ENCODE measurements at regions of chr11 and their contacts with region 1.

Region 1: DNA sequence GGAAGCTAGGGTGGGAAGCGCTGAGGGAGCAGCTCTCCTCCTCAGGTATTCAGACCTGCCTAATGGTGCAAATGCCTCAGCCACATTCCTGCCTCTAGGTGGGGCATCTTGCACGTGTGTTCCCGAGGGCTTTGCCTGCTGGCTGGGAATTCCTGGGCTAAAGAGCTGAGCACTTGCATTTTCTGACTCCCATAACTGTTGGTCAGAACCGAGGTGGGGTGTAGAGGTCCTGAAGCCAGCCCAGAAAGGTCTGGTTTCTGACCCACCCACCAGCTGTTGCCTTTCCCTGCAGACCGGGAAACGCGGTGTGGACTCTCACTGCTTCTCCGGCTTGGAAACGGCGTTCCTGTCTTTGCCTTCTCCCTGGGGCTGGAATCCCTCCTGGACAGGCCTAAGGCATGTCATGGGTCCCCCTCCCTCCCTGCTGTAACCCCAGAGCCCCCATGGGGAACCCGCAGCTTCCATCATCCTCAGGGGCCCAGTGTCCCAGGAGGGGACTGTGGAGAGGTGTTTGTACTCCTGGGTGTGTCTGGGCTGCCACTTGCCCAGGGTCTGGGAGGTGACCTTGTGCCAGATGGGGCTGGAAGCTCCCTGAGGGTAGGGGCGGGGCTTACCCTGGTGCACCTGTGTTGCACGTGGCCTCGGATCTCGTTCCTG is 24.0 kb upstream of the SMIM38 start:
- DNase-seq: peak in 4 of 5 donors; percentile 63 to 81 (median 70)
- ATAC-seq: peak; percentile 75 to 86 (median 81)
- H3K4me3 ChIP-seq: no peak overlapping the region
- H3K27ac ChIP-seq: peak overlapping the region in 8 of 12 donors; percentile 1 to 68 (median 41)
- H3K4me1 ChIP-seq: peaks cover 0 to 20% (median 14%) of the 10 kb centered on the region in 12 donors
- H3K27me3 ChIP-seq: no peaks in the 10 kb centered on the region
- CTCF ChIP-seq: peak; percentile 63 to 89 (median 85)
- POLR2A ChIP-seq: no peak

Region 2: DNA sequence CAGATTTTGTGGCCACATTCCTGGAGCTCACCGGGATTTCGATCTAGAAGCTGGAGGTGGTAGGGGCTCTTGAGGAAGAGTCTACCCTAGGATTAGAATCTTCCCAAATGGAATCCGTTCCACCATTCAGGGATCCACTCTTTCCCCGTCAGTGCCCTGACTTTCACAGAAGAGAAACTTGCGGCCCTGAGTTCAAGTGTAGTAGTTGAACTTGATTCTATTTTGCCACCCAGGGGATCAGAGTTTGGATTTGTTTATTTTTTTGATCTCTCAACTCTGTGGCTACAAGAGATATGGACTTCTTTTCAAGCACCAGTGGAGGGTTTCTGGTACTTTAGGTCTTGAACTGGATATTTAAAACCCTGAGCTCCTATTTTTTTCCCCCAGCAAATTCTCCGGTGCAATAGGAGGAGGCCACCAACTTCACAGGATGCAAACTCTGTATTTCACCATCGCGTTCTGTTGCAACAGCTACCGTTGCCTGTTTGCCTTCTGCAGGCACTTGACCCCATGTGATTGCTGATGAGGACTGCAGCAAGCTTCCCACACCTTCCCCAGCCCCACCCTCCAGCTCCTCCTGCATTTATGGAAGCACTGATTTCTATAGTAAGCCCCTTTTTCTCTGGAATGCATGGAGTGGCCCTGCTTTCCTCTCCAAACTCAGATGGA is 103.9 kb before region 1 on chr11:
- intact Hi-C with region 1: no loop called
- DNase-seq: no peak
- ATAC-seq: no peak
- H3K4me3 ChIP-seq: no peak overlapping the region
- H3K27ac ChIP-seq: no peak overlapping the region
- H3K4me1 ChIP-seq: no peaks in the 10 kb centered on the region
- H3K27me3 ChIP-seq: no peaks in the 10 kb centered on the region
- CTCF ChIP-seq: no peak
- POLR2A ChIP-seq: no peak

Region 3: GRCh38 chr11:69200331-69201065 is 68.7 kb after region 1 on chr11:
- intact Hi-C with region 1: loop called in 2 of 10 experiments (anchors 2 to 10 kb)
- DNase-seq: peak; percentile 53 to 76 (median 55)
- ATAC-seq: peak in 3 of 4 donors; percentile 34 to 74 (median 54)
- H3K4me3 ChIP-seq: no peak overlapping the region
- H3K27ac ChIP-seq: no peak overlapping the region
- H3K4me1 ChIP-seq: peaks cover 0 to 13% (median 8%) of the 10 kb centered on the region in 12 donors
- H3K27me3 ChIP-seq: peaks cover 0 to 8% (median 0%) of the 10 kb centered on the region in 9 donors
- CTCF ChIP-seq: no peak
- POLR2A ChIP-seq: no peak

Region 4: GRCh38 chr11:69211920-69212571 is 80.3 kb after region 1 on chr11:
- intact Hi-C with region 1: loop called in 4 of 10 experiments (anchors 5 to 10 kb)
- DNase-seq: no peak
- ATAC-seq: no peak
- H3K4me3 ChIP-seq: no peak overlapping the region
- H3K27ac ChIP-seq: no peak overlapping the region
- H3K4me1 ChIP-seq: peaks cover 0 to 4% (median 0%) of the 10 kb centered on the region in 12 donors
- H3K27me3 ChIP-seq: peaks cover 0 to 9% (median 0%) of the 10 kb centered on the region in 9 donors
- CTCF ChIP-seq: peak in 9 of 12 donors; percentile 17 to 48 (median 25)
- POLR2A ChIP-seq: no peak

Region 5: GRCh38 chr11:69436973-69437875 is 305.5 kb after region 1 on chr11:
- intact Hi-C with region 1: loop called in 2 of 10 experiments (anchors 10 kb)
- DNase-seq: peak in 1 of 5 donors; percentile 13
- ATAC-seq: peak in 1 of 4 donors; percentile 15
- H3K4me3 ChIP-seq: no peak overlapping the region
- H3K27ac ChIP-seq: no peak overlapping the region
- H3K4me1 ChIP-seq: peaks cover 0 to 16% (median 2%) of the 10 kb centered on the region in 12 donors
- H3K27me3 ChIP-seq: peaks cover 0 to 3% (median 0%) of the 10 kb centered on the region in 9 donors
- CTCF ChIP-seq: no peak
- POLR2A ChIP-seq: no peak

Region 6: DNA sequence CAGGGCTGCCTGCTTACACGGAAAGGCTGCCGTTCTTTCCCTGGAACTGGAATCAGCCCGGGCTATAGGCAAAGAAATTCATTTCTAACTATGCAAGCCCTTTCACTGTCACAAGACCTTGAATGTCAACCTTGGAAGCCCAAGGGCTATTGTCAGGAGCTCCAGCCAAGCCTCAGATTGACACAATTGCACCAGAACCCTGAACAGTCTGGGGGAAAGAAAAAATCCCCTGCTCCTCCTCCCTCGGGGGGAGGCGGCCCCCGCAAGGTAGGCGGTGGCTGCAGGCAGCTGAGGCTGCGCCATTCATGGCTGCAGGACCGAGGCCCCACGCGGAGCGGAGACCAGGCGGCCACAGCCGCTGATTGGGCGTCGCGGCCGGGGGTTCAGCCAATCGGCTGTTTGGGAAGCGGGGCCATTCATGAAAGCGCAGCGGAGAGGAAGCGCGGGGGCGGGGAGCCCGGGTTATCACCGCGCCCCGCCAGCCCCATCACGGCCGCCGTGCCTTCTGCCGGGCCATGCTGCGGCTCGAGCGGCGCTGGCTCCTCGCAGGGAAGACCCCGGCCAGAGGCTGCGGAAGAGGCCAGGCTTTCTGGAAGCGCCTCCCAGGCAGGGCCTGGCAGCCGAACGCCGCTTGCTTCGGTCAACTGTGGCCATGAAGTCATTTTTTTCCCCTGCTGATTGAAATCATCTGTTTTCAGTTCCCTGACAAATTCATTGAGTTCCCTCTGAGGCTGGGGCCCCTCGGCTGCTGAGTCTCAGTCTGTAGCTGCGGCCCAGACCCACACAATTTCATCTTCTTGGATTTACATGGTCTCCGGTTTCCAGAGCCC is 311.6 kb after region 1 on chr11:
- intact Hi-C with region 1: loop called in 2 of 10 experiments (anchors 10 kb)
- DNase-seq: peak; percentile 94 to 96 (median 95)
- ATAC-seq: peak; percentile 87 to 96 (median 93)
- H3K4me3 ChIP-seq: peak overlapping the region in 10 of 12 donors; percentile 29 to 64 (median 50)
- H3K27ac ChIP-seq: peak overlapping the region; percentile 67 to 95 (median 90)
- H3K4me1 ChIP-seq: peaks cover 3 to 47% (median 33%) of the 10 kb centered on the region in 12 donors
- H3K27me3 ChIP-seq: no peaks in the 10 kb centered on the region
- CTCF ChIP-seq: no peak
- POLR2A ChIP-seq: peak in 1 of 2 donors; percentile 70

Region 7: GRCh38 chr11:69497221-69497787 is 365.5 kb after region 1 on chr11:
- intact Hi-C with region 1: loop called in 2 of 10 experiments (anchors 10 kb)
- DNase-seq: peak; percentile 87 to 96 (median 91)
- ATAC-seq: peak; percentile 95 to 98 (median 97)
- H3K4me3 ChIP-seq: no peak overlapping the region
- H3K27ac ChIP-seq: peak overlapping the region; percentile 64 to 94 (median 88)
- H3K4me1 ChIP-seq: peaks cover 3 to 70% (median 28%) of the 10 kb centered on the region in 12 donors
- H3K27me3 ChIP-seq: no peaks in the 10 kb centered on the region
- CTCF ChIP-seq: peak in 2 of 12 donors; percentile 7 to 15
- POLR2A ChIP-seq: peak in 1 of 2 donors; percentile 23

Measured in heart left ventricle (tissue), 16 donors.